ENCODE measurements at regions of chr12 and their contacts with region 1.

Region 1: GRCh38 chr12:62799126-62799736 is 135.7 kb downstream of the PPM1H start:
- DNase-seq: peak in 1 of 3 donors; percentile 87
- ATAC-seq: peak; percentile 72
- H3K4me3 ChIP-seq: no peak overlapping the region
- H3K4me1 ChIP-seq: no peaks in the 10 kb centered on the region
- CTCF ChIP-seq: peak; percentile 88

Region 2: GRCh38 chr12:62435303-62436163 is 363.7 kb before region 1 on chr12:
- intact Hi-C with region 1: loop called (anchors 10 kb)
- DNase-seq: peak; percentile 51 to 62 (median 61)
- ATAC-seq: peak; percentile 86
- H3K4me3 ChIP-seq: no peak overlapping the region
- H3K4me1 ChIP-seq: no peaks in the 10 kb centered on the region
- CTCF ChIP-seq: no peak

Region 3: GRCh38 chr12:62446754-62447452 is 352.3 kb before region 1 on chr12:
- intact Hi-C with region 1: loop called in 1 of 2 experiments (anchors 10 kb)
- DNase-seq: no peak
- ATAC-seq: peak; percentile 97
- H3K4me3 ChIP-seq: no peak overlapping the region
- H3K4me1 ChIP-seq: peaks cover 3% of the 10 kb centered on the region
- CTCF ChIP-seq: no peak

Region 4: GRCh38 chr12:62552906-62553556 is 246.2 kb before region 1 on chr12:
- intact Hi-C with region 1: no loop called
- DNase-seq: peak in 1 of 3 donors; percentile 22
- ATAC-seq: peak; percentile 52
- H3K4me3 ChIP-seq: no peak overlapping the region
- H3K4me1 ChIP-seq: peaks cover 3% of the 10 kb centered on the region
- CTCF ChIP-seq: no peak

Region 5: DNA sequence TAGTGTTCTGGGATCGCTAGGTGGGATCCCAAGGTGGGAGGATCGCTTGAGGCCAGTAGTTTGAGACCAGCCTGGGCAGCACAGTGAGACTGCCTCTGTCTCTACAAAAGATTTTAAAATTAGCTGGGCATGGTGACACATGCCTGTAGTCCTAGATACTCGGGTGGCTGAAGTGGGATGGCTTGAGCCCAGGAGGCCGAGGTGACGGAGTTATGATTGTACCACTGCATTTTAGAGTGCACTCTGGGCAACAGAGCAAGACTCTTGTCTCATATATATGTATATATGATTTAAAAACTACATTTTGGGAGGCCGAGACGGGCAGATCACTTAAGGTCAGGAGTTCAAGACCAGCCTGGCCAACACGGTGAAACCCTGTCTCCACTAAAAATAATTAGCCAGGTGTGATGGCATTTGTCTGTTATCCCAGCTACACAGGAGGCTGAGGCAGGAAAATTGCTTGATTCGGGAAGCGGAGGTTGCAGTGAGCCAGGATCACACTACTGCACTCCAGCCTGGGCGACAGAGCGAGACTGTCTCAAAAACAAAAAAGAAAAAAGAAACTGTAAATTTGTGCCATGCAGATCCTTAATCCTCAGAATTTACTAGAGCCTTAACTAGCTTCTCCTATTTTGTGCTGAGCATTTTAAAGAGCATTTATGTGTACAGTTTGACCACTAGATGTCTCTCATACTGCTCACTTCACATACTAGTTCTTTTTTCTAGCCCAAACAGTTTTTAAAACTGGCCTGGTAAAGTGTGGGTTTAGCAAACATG is 217.8 kb before region 1 on chr12:
- intact Hi-C with region 1: loop called (anchors 5 to 10 kb)
- DNase-seq: no peak
- ATAC-seq: peak; percentile 67
- H3K4me3 ChIP-seq: no peak overlapping the region
- H3K4me1 ChIP-seq: no peaks in the 10 kb centered on the region
- CTCF ChIP-seq: no peak

Region 6: DNA sequence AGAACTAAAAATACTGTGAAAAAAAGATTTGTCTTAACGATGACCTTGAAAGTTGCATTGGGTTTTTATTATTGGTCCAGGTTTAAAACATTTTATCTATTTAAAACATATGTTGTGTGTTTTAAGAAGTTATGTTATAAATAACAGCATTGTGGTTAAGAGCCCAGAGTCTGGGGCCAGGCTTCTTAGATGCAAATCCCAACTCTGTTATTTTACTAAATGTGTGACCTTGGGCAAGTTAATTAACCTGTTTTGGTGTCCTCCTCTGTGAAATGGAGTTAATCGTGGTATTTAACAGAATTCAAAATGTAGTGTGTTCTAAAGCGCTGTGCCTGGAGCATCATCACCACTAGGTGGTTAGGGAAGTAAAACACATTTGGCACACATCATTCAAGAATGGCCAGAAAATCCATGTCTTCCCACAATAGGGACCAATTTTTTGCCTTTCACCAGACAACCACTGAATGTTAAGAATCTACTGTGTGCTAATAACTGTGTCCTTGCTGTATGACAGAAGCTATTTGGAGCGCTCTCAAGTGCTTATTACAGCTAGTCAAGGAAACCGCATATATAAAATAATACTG is 199.3 kb before region 1 on chr12:
- intact Hi-C with region 1: loop called in 1 of 2 experiments (anchors 5 kb)
- DNase-seq: no peak
- ATAC-seq: no peak
- H3K4me3 ChIP-seq: no peak overlapping the region
- H3K4me1 ChIP-seq: peaks cover 10% of the 10 kb centered on the region
- CTCF ChIP-seq: no peak

Region 7: DNA sequence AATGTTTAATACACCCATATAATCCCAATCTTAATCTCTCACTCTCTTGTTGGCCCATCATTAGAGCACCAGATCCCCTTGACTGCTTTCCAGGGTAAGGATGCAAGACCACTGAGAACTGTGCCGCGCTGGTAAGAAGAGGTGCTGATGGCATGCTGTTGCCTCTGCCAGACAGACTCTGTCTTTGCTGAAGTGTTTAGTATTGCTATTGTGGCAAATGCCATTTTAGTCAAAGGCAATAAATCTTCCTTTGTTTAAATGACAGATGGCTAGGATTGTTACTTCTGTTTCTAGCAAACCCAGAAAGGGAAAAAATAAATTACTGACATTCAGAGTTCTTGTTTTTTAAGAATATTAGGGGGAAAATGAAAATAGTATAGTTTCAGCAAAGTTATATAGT is 180.3 kb before region 1 on chr12:
- intact Hi-C with region 1: no loop called
- DNase-seq: no peak
- ATAC-seq: no peak
- H3K4me3 ChIP-seq: no peak overlapping the region
- H3K4me1 ChIP-seq: no peaks in the 10 kb centered on the region
- CTCF ChIP-seq: no peak